PC-3 (cell line): ENCODE measurements at regions of chr13 and their contacts with region 1.

Region 1: GRCh38 chr13:97344265-97345175 is 89.4 kb upstream of the RAP2A start:
- DNase-seq: peak; percentile 68
- ATAC-seq: peak; percentile 89
- H3K4me3 ChIP-seq: no peak overlapping the region
- H3K27ac ChIP-seq: no peak overlapping the region
- H3K4me1 ChIP-seq: peaks cover 17% of the 10 kb centered on the region
- H3K27me3 ChIP-seq: no peaks in the 10 kb centered on the region
- CTCF ChIP-seq: peak; percentile 80

Region 2: GRCh38 chr13:97030705-97031452 is 313.6 kb before region 1 on chr13:
- CTCF ChIA-PET with region 1: no interaction called
- POLR2A ChIA-PET with region 1: no interaction called
- intact Hi-C with region 1: loop called (anchors 1 kb)
- DNase-seq: peak; percentile 60
- ATAC-seq: peak; percentile 68
- H3K4me3 ChIP-seq: no peak overlapping the region
- H3K27ac ChIP-seq: no peak overlapping the region
- H3K4me1 ChIP-seq: no peaks in the 10 kb centered on the region; the same call in 1 of the 2 replicates
- H3K27me3 ChIP-seq: no peaks in the 10 kb centered on the region
- CTCF ChIP-seq: peak; percentile 58

Region 3: DNA sequence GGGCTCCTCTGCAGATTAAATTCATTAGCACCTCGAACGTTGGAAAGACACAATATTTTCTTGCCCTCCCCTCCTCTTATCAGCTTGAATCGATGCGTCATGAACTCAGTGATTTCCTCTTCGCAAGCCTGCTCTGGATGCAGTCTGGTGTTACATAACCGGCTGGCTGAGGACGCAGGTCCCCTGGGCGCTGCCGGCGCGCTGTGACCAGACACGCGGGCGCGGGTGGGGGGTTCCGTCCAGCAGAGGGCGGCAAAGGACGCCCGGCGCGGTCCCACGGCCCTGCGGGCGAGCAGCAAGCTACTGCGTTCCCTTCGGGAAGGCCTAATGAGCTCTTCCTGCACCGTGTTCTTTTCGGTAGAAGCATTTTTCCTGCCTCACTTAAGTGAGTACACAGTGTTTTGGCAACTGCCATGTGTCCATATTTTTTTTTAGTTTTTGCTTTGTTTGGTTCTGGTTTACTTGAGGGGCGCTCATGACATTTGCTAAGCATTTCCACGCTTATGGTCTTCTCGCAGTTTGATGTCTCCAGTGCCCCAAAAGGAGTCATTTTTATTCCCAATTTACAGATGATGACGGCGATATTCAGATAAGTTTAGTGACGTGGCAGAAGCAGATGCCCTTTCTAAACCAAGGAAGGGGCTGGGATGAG is 234.6 kb before region 1 on chr13:
- CTCF ChIA-PET with region 1: interaction called, 5 read pairs
- POLR2A ChIA-PET with region 1: no interaction called
- intact Hi-C with region 1: loop called (anchors 1 kb)
- DNase-seq: peak; percentile 82
- ATAC-seq: peak; percentile 94
- H3K4me3 ChIP-seq: no peak overlapping the region
- H3K27ac ChIP-seq: no peak overlapping the region
- H3K4me1 ChIP-seq: peaks cover 12% of the 10 kb centered on the region
- H3K27me3 ChIP-seq: no peaks in the 10 kb centered on the region
- CTCF ChIP-seq: peak; percentile 88

Region 4: GRCh38 chr13:97212601-97213040 is 131.9 kb before region 1 on chr13:
- CTCF ChIA-PET with region 1: no interaction called
- POLR2A ChIA-PET with region 1: no interaction called
- intact Hi-C with region 1: loop called (anchors 1 kb)
- DNase-seq: peak; percentile 68
- ATAC-seq: peak; percentile 89
- H3K4me3 ChIP-seq: no peak overlapping the region
- H3K27ac ChIP-seq: no peak overlapping the region
- H3K4me1 ChIP-seq: 0 out of 2 replicates have a peak, but pooled peaks cover 10% of the 10 kb centered on the region
- H3K27me3 ChIP-seq: no peaks in the 10 kb centered on the region
- CTCF ChIP-seq: peak; percentile 82

Region 5: GRCh38 chr13:97257800-97258799 is 86.4 kb before region 1 on chr13:
- CTCF ChIA-PET with region 1: no interaction called
- POLR2A ChIA-PET with region 1: no interaction called
- intact Hi-C with region 1: loop called (anchors 5 kb)
- DNase-seq: peak; percentile 82
- ATAC-seq: peak; percentile 50
- H3K4me3 ChIP-seq: peak overlapping the region; percentile 28; the same call in 1 of the 2 replicates
- H3K27ac ChIP-seq: peak overlapping the region; percentile 93
- H3K4me1 ChIP-seq: peaks cover 67% of the 10 kb centered on the region
- H3K27me3 ChIP-seq: no peaks in the 10 kb centered on the region
- CTCF ChIP-seq: peak; percentile 39

Region 6: GRCh38 chr13:97275265-97275664 is 69.3 kb before region 1 on chr13:
- CTCF ChIA-PET with region 1: no interaction called
- POLR2A ChIA-PET with region 1: no interaction called
- intact Hi-C with region 1: loop called (anchors 5 kb)
- DNase-seq: peak; percentile 75
- ATAC-seq: peak; percentile 54
- H3K4me3 ChIP-seq: no peak overlapping the region; the same call in 1 of the 2 replicates
- H3K27ac ChIP-seq: peak overlapping the region; percentile 76
- H3K4me1 ChIP-seq: peaks cover 55% of the 10 kb centered on the region
- H3K27me3 ChIP-seq: no peaks in the 10 kb centered on the region
- CTCF ChIP-seq: no peak

Region 7: DNA sequence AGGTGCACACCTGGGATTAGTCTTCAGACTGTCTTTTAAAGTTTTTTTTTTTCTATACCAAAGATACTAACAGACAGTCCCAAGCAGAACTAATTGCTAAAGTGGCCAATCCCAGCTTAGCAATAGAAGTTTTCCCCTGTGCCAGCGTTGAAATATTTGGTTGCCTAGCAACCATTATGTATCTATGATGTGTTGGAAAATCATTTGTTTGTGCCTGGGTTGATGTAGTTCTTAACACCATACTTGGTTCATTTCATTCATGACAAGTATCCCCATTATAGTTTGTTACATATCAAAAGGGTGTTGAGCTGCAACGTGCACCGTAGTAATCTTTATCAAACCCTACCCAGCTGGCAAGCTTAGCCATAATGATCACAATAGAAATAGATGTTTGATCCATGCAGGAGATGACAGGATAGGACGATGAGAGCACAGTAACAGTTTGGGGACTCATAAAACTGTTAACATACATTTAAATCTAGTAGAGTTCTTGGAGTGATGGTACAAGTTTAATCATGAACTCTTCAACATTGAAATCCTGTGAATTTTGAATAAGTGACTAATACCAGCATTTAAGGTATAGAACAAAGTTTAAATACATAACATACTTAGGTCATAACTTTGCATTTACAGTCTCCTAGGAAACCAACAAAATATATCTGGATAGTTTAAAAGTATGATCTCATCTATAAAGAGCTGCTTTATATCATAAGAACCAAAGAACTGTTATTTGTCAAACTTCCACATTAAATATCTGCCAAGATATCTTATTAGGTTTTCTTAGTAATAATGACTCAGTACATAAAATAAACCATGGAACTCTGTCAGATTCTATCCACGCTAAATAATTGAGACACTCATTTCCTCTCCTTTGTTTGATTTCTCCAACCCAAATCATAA is 49.0 kb before region 1 on chr13:
- CTCF ChIA-PET with region 1: no interaction called
- POLR2A ChIA-PET with region 1: no interaction called
- intact Hi-C with region 1: loop called (anchors 5 kb)
- DNase-seq: peak; percentile 92
- ATAC-seq: peak; percentile 85
- H3K4me3 ChIP-seq: peak overlapping the region; percentile 36; the same call in 1 of the 2 replicates
- H3K27ac ChIP-seq: peak overlapping the region; percentile 99
- H3K4me1 ChIP-seq: peaks cover 32% of the 10 kb centered on the region
- H3K27me3 ChIP-seq: no peaks in the 10 kb centered on the region
- CTCF ChIP-seq: no peak

Region 8: GRCh38 chr13:97367016-97367822 is 22.7 kb after region 1 on chr13:
- CTCF ChIA-PET with region 1: no interaction called
- POLR2A ChIA-PET with region 1: no interaction called
- intact Hi-C with region 1: no loop called
- DNase-seq: no peak
- ATAC-seq: no peak
- H3K4me3 ChIP-seq: no peak overlapping the region
- H3K27ac ChIP-seq: no peak overlapping the region
- H3K4me1 ChIP-seq: no peaks in the 10 kb centered on the region
- H3K27me3 ChIP-seq: no peaks in the 10 kb centered on the region
- CTCF ChIP-seq: no peak